ENCODE measurements at regions of chr15 and their contacts with region 1.

Region 1: GRCh38 chr15:40217159-40217824 is 21.6 kb upstream of the PAK6 start:
- DNase-seq: peak in 11 of 14 experiments; percentile 9 to 85 (median 31)
- ATAC-seq: peak; percentile 99
- H3K4me3 ChIP-seq: no peak overlapping the region
- H3K4me3 Mint-ChIP-seq: no peak overlapping the region
- H3K27ac ChIP-seq: no peak overlapping the region
- H3K27ac Mint-ChIP-seq: no peak overlapping the region
- H3K4me1 ChIP-seq: no peaks in the 10 kb centered on the region
- H3K4me1 Mint-ChIP-seq: no peaks in the 10 kb centered on the region
- H3K27me3 ChIP-seq: no peaks in the 10 kb centered on the region
- H3K27me3 Mint-ChIP-seq: no peaks in the 10 kb centered on the region
- CTCF ChIP-seq: peak; percentile 90

Region 2: DNA sequence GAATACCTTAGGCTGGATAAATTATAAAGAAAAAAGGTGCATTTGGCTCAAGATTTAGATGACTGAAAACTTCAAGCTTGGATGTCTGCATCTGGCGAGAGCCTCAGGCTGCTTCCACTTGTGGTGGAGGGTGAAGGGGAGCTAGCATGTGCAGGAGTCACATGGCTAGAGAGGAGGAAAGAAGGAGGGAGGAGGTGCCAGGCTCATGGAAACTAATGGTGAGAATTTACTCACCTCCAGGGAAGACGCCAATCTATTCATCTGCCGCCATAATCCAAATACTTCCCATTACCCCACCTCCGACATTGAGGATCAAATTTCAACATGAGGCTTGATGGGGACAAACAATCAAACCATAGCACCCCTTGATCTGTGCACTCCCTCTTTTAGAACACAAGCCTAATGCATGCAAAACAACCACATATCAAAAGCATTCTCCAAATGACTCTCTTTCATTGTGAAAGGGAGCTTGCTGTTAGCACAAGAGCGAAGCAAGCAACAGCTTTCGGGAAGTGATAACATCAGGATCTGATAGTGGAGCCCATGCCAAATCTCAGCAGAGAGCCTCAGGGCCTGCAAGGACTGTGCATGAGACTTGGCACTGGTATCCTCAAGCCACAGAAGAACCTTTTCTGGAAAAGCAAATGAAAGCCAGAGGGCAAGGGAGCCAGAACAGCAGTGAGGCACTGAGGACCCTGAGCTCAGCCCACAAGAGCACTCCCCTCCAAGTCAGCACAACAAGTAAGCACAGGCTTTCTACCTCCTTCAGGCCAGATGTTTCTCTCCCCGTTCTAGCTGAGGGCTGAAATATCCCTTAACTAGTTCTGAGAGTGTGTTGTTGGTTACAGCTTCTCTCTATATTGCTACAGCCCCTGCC is 686.6 kb before region 1 on chr15:
- CTCF ChIA-PET with region 1: no interaction called
- POLR2A ChIA-PET with region 1: no interaction called
- intact Hi-C with region 1: no loop called
- DNase-seq: no peak
- ATAC-seq: no peak
- H3K4me3 ChIP-seq: no peak overlapping the region
- H3K4me3 Mint-ChIP-seq: no peak overlapping the region
- H3K27ac ChIP-seq: no peak overlapping the region
- H3K27ac Mint-ChIP-seq: no peak overlapping the region
- H3K4me1 ChIP-seq: no peaks in the 10 kb centered on the region
- H3K4me1 Mint-ChIP-seq: no peaks in the 10 kb centered on the region
- H3K27me3 ChIP-seq: peaks cover 0 to 2% of the 10 kb centered on the region in 2 experiments
- H3K27me3 Mint-ChIP-seq: peaks cover 12% of the 10 kb centered on the region
- CTCF ChIP-seq: no peak

Region 3: GRCh38 chr15:40044717-40045571 is 172.3 kb before region 1 on chr15:
- CTCF ChIA-PET with region 1: interaction called, 11 read pairs
- POLR2A ChIA-PET with region 1: no interaction called
- intact Hi-C with region 1: loop called (anchors 1 to 5 kb)
- DNase-seq: peak; percentile 66 to 91 (median 78)
- ATAC-seq: peak; percentile 82
- H3K4me3 ChIP-seq: no peak overlapping the region
- H3K4me3 Mint-ChIP-seq: peak overlapping the region; percentile 39
- H3K27ac ChIP-seq: no peak overlapping the region
- H3K27ac Mint-ChIP-seq: peak overlapping the region; percentile 70
- H3K4me1 ChIP-seq: peaks cover 56% of the 10 kb centered on the region
- H3K4me1 Mint-ChIP-seq: peaks cover 68% of the 10 kb centered on the region
- H3K27me3 ChIP-seq: no peaks in the 10 kb centered on the region
- H3K27me3 Mint-ChIP-seq: no peaks in the 10 kb centered on the region
- CTCF ChIP-seq: peak; percentile 95

Region 4: GRCh38 chr15:40160689-40161688 is 56.3 kb before region 1 on chr15 and contains the start of gene BUB1B:
- CTCF ChIA-PET with region 1: no interaction called
- POLR2A ChIA-PET with region 1: no interaction called
- intact Hi-C with region 1: no loop called
- DNase-seq: peak; percentile 84 to 96 (median 90)
- ATAC-seq: peak; percentile 99
- H3K4me3 ChIP-seq: peak within 1 kb of the TSS; percentile 78
- H3K4me3 Mint-ChIP-seq: no peak within 1 kb of the TSS
- H3K27ac ChIP-seq: no peak within 1 kb of the TSS
- H3K27ac Mint-ChIP-seq: no peak within 1 kb of the TSS
- H3K4me1 ChIP-seq: peaks cover 12% of the 10 kb centered on the region
- H3K4me1 Mint-ChIP-seq: no peaks in the 10 kb centered on the region
- H3K27me3 ChIP-seq: no peaks in the 10 kb centered on the region
- H3K27me3 Mint-ChIP-seq: no peaks in the 10 kb centered on the region
- CTCF ChIP-seq: no peak
- total RNA-seq, gene BUB1B: 1.4 to 2.4 TPM

Region 5: GRCh38 chr15:40204100-40204499 is 13.2 kb before region 1 on chr15:
- CTCF ChIA-PET with region 1: interaction called, 10 read pairs
- POLR2A ChIA-PET with region 1: no interaction called
- intact Hi-C with region 1: no loop called
- DNase-seq: no peak
- ATAC-seq: no peak
- H3K4me3 ChIP-seq: no peak overlapping the region
- H3K4me3 Mint-ChIP-seq: no peak overlapping the region
- H3K27ac ChIP-seq: no peak overlapping the region
- H3K27ac Mint-ChIP-seq: no peak overlapping the region
- H3K4me1 ChIP-seq: no peaks in the 10 kb centered on the region
- H3K4me1 Mint-ChIP-seq: peaks cover 2% of the 10 kb centered on the region
- H3K27me3 ChIP-seq: no peaks in the 10 kb centered on the region
- H3K27me3 Mint-ChIP-seq: no peaks in the 10 kb centered on the region
- CTCF ChIP-seq: no peak

Measured in CD4-positive, alpha-beta T cell (primary cell).